Adrenal gland (tissue), 19 donors: ENCODE measurements at regions of chr6 and their contacts with region 1.

Region 1: GRCh38 chr6:24589334-24589733 is 56.7 kb downstream of the KIAA0319 start:
- DNase-seq: no peak
- H3K4me3 ChIP-seq: no peak overlapping the region
- H3K27ac ChIP-seq: no peak overlapping the region
- H3K4me1 ChIP-seq: no peaks in the 10 kb centered on the region
- H3K27me3 ChIP-seq: peaks cover 4% of the 10 kb centered on the region
- CTCF ChIP-seq: no peak
- POLR2A ChIP-seq: no peak

Region 2: GRCh38 chr6:24761193-24761835 is 172.0 kb after region 1 on chr6:
- intact Hi-C with region 1: loop called in 1 of 2 experiments (anchors 5 kb)
- DNase-seq: no peak
- H3K4me3 ChIP-seq: no peak overlapping the region
- H3K27ac ChIP-seq: no peak overlapping the region
- H3K4me1 ChIP-seq: no peaks in the 10 kb centered on the region
- H3K27me3 ChIP-seq: no peaks in the 10 kb centered on the region
- CTCF ChIP-seq: no peak
- POLR2A ChIP-seq: no peak